Thyroid gland (tissue), 4 donors: ENCODE measurements at regions of chr9 and their contacts with region 1.

Region 1: GRCh38 chr9:4315582-4316215 is 15.8 kb upstream of the GLIS3 start:
- DNase-seq: peak; percentile 79 to 81
- H3K4me3 ChIP-seq: no peak overlapping the region
- H3K27ac ChIP-seq: no peak overlapping the region
- H3K4me1 ChIP-seq: peaks cover 0 to 10% of the 10 kb centered on the region in 2 donors
- H3K27me3 ChIP-seq: no peaks in the 10 kb centered on the region
- CTCF ChIP-seq: peak; percentile 74 to 93 (median 90)
- POLR2A ChIP-seq: no peak

Region 2: DNA sequence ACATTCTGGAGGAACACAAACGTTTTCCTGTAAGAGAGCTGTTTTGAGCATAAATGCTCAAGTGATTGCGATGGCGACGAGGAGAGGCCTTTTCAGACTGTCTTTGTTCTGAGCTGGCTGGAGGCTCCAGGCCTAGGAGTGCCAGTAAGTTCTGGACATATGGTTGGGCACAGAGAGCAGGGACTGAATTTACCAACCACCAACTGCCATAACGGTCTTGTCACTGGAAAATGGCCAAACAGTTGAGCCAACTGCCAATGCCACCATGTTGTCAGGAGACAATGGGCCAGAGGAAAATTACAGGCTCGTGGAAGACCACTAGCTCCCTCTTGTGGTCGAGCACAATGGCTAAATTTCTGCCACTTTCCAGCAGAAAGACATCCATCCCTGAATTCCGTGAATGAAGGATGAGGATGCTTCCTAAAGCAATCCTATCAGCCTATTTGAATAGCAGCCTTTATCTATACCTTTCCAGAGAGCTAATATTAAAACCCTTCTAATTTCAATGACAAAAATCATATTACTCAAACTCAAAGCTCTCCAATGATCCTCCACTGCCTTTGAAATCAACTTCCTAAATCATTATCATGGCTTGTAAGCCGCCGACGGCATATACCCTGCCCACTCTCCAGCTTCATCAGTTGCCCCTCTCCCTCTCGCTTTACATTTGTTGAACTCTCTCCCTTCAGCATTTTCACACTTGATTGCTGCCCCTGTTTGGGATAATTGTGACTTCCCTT is 51.1 kb after region 1 on chr9:
- intact Hi-C with region 1: loop called (anchors 5 kb)
- DNase-seq: peak; percentile 41
- H3K4me3 ChIP-seq: no peak overlapping the region
- H3K27ac ChIP-seq: no peak overlapping the region
- H3K4me1 ChIP-seq: no peaks in the 10 kb centered on the region
- H3K27me3 ChIP-seq: no peaks in the 10 kb centered on the region
- CTCF ChIP-seq: peak in 5 of 6 experiments; percentile 39 to 75 (median 70)
- POLR2A ChIP-seq: no peak

Region 3: DNA sequence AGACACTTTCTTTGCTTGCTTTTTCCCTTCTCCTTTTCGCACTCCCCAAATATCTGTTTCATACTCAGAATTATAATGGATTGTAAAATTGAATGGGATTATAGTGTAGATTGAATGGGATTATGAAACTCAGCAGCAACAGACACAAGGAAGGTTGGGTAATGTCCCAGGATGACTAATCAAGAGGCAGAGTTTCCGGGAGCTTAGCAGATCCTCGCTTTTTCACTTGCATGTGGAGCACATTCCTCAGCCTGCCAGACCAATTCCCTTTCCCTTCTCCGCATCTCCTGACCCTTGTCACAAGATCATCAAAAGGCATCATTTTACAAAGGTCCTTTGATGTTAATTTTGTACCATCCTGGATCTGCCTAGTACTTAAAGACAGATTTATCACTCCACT is 119.5 kb after region 1 on chr9:
- intact Hi-C with region 1: no loop called
- DNase-seq: no peak
- H3K4me3 ChIP-seq: no peak overlapping the region
- H3K27ac ChIP-seq: no peak overlapping the region
- H3K4me1 ChIP-seq: no peaks in the 10 kb centered on the region
- H3K27me3 ChIP-seq: no peaks in the 10 kb centered on the region
- CTCF ChIP-seq: no peak
- POLR2A ChIP-seq: no peak